PC-9 (cell line): ENCODE measurements at regions of chr16 and their contacts with region 1.

Region 1: GRCh38 chr16:20192801-20193200 is 119.1 kb upstream of the GPR139 start:
- DNase-seq: no peak
- H3K4me3 ChIP-seq: no peak overlapping the region
- H3K27ac ChIP-seq: no peak overlapping the region
- H3K4me1 ChIP-seq: no peaks in the 10 kb centered on the region
- H3K27me3 ChIP-seq: peaks cover 12% of the 10 kb centered on the region
- CTCF ChIP-seq: no peak

Region 2: GRCh38 chr16:20122011-20122410 is 70.8 kb before region 1 on chr16:
- CTCF ChIA-PET with region 1: no interaction called
- POLR2A ChIA-PET with region 1: interaction called, 18 read pairs
- intact Hi-C with region 1: no loop called
- DNase-seq: no peak
- H3K4me3 ChIP-seq: no peak overlapping the region
- H3K27ac ChIP-seq: no peak overlapping the region
- H3K4me1 ChIP-seq: no peaks in the 10 kb centered on the region
- H3K27me3 ChIP-seq: peaks cover 62% of the 10 kb centered on the region
- CTCF ChIP-seq: no peak